ENCODE measurements at regions of chr11 and their contacts with region 1.

Region 1: GRCh38 chr11:11966826-11967668 is 41.4 kb downstream of the DKK3 start:
- DNase-seq: peak; percentile 55
- ATAC-seq: peak; percentile 94
- H3K4me3 ChIP-seq: no peak overlapping the region
- H3K27ac ChIP-seq: no peak overlapping the region
- H3K4me1 ChIP-seq: no peaks in the 10 kb centered on the region; the same call in 1 of the 2 replicates
- H3K27me3 ChIP-seq: no peaks in the 10 kb centered on the region
- CTCF ChIP-seq: peak; percentile 93

Region 2: GRCh38 chr11:11977206-11977938 is 10.3 kb after region 1 on chr11:
- CTCF ChIA-PET with region 1: interaction called, 14 read pairs
- POLR2A ChIA-PET with region 1: no interaction called
- in situ Hi-C with region 1: no loop called
- intact Hi-C with region 1: no loop called
- DNase-seq: peak; percentile 75
- ATAC-seq: peak; percentile 86
- H3K4me3 ChIP-seq: peak overlapping the region in 1 of 2 experiments; percentile 5; a peak in 1 of 4 replicates
- H3K27ac ChIP-seq: peak overlapping the region; percentile 95
- H3K4me1 ChIP-seq: peaks cover 51% of the 10 kb centered on the region
- H3K27me3 ChIP-seq: no peaks in the 10 kb centered on the region
- CTCF ChIP-seq: no peak

Measured in Panc1 (cell line).